Activated CD4-positive, alpha-beta T cell treated with anti-CD3 and anti-CD28 coated beads, Interleukin-2, amount 10 ng/mL, durations not matched to agents 24 days and 14 days (primary cell): ENCODE measurements at regions of chr2 and their contacts with region 1.

Region 1: DNA sequence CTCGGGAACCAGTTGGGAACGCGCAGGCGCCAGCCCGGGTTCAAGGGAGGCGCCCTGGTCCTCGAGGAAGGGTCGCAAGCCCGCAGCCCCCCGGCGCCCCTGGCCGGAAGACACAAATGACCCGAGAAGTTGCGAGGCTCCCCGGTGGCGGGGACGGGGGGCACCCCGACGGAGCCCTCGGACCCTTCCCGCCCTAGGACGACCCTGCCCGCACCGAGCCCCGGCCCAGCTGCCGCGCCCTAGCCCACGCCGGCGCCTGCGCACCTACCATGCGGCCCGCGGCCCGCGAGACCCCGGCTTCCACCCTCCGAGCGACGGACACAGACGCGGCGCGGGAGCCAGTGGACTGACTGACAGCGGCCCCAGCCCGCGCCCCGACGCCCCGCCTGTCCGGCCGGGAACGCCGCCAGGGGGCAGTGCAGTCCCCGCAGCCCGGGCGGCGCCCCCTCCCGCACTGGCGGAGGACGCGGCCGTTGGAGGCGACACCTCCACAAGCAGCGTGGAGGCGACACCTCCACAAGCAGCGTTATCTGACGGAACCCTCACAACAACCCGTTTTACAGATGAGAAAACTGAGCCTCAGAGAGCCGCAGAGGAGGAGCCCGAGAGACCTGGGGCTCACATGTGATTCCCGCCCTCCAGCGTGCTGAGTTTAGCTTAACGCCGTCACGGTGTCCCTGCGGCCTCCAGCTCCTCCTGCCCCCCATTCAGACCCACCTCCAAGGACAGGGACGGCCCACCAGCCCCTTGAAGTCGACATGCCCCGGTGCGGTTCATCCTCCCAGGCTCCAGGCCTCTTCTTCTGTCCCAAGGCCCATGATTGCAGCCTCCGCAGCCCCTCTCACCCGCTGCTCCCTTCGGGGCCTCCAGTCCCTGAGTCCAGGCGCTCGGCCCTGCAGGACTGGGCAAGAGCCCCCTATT is at the start of gene NMUR1:
- DNase-seq: peak; percentile 94
- H3K4me3 Mint-ChIP-seq: peak within 1 kb of the TSS; percentile 51
- H3K27ac Mint-ChIP-seq: no peak within 1 kb of the TSS
- H3K4me1 Mint-ChIP-seq: peaks cover 16% of the 10 kb centered on the region
- H3K27me3 Mint-ChIP-seq: peaks cover 33% of the 10 kb centered on the region
- total RNA-seq, gene NMUR1: 0.09 TPM in 1 of 2 replicates, not detected in the other

Region 2: GRCh38 chr2:231545105-231545902 is 15.0 kb after region 1 on chr2:
- intact Hi-C with region 1: loop called (anchors 1 kb)
- DNase-seq: peak; percentile 92
- H3K4me3 Mint-ChIP-seq: peak overlapping the region; percentile 72
- H3K27ac Mint-ChIP-seq: peak overlapping the region; percentile 91
- H3K4me1 Mint-ChIP-seq: peaks cover 39% of the 10 kb centered on the region
- H3K27me3 Mint-ChIP-seq: peaks cover 8% of the 10 kb centered on the region